PC-3 (cell line): ENCODE measurements at regions of chr6 and their contacts with region 1.

Region 1: GRCh38 chr6:422433-423054 is 31.0 kb downstream of the IRF4 start:
- DNase-seq: peak; percentile 96
- ATAC-seq: peak; percentile 100
- H3K4me3 ChIP-seq: peak overlapping the region; percentile 28; the same call in 1 of the 2 replicates
- H3K27ac ChIP-seq: peak overlapping the region; percentile 76
- H3K4me1 ChIP-seq: peaks cover 18% of the 10 kb centered on the region
- H3K27me3 ChIP-seq: no peaks in the 10 kb centered on the region
- CTCF ChIP-seq: no peak

Region 2: GRCh38 chr6:209432-210103 is 213.0 kb before region 1 on chr6:
- CTCF ChIA-PET with region 1: no interaction called
- POLR2A ChIA-PET with region 1: no interaction called
- intact Hi-C with region 1: no loop called
- DNase-seq: no peak
- ATAC-seq: no peak
- H3K4me3 ChIP-seq: no peak overlapping the region
- H3K27ac ChIP-seq: no peak overlapping the region
- H3K4me1 ChIP-seq: no peaks in the 10 kb centered on the region
- H3K27me3 ChIP-seq: peaks cover 20% of the 10 kb centered on the region
- CTCF ChIP-seq: no peak

Region 3: GRCh38 chr6:436308-437036 is 13.9 kb after region 1 on chr6:
- CTCF ChIA-PET with region 1: no interaction called
- POLR2A ChIA-PET with region 1: no interaction called
- intact Hi-C with region 1: loop called (anchors 1 kb)
- DNase-seq: peak; percentile 79
- ATAC-seq: peak; percentile 85
- H3K4me3 ChIP-seq: peak overlapping the region; percentile 24; the same call in 1 of the 2 replicates
- H3K27ac ChIP-seq: peak overlapping the region; percentile 97
- H3K4me1 ChIP-seq: peaks cover 25% of the 10 kb centered on the region
- H3K27me3 ChIP-seq: no peaks in the 10 kb centered on the region
- CTCF ChIP-seq: no peak